ENCODE measurements at regions of chr3 and their contacts with region 1.

Region 1: DNA sequence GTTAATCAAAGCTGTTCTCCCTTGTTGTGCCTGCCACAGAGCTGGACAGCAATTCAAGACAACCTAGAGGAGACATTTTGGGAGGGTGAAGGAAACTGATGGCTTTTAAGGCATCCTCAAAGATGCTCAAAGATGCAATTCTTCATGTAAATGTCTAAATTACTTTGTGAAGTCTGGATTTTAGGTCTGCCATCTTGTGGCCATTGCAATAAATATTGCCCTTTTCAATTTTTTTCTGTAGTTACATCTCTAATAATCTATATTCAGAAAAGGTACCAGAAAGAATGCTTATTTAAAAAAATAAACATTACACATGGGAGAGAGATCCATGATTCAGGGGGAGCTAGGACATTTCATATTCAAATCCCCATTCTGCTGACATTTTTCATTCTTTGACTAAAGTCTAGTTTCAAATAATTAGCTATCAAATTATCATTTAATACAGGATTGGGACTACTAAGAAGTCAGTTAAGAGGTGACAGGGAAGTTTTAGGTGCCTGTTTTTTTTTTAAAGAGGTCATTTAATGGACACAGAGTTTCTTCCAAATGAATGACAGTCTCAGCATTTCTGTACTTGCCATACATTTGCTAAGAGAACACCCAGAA is 259.8 kb upstream of the WNT5A start:
- DNase-seq: no peak
- ATAC-seq: no peak
- H3K4me3 ChIP-seq: no peak overlapping the region
- H3K27ac ChIP-seq: no peak overlapping the region
- H3K4me1 ChIP-seq: no peaks in the 10 kb centered on the region
- H3K27me3 ChIP-seq: no peaks in the 10 kb centered on the region
- CTCF ChIP-seq: peak; percentile 32 to 47 (median 45); a peak in 4 of 6 replicates
- EP300 ChIP-seq: no peak
- POLR2A ChIP-seq: no peak
- RAD21 ChIP-seq: peak; percentile 48

Region 2: DNA sequence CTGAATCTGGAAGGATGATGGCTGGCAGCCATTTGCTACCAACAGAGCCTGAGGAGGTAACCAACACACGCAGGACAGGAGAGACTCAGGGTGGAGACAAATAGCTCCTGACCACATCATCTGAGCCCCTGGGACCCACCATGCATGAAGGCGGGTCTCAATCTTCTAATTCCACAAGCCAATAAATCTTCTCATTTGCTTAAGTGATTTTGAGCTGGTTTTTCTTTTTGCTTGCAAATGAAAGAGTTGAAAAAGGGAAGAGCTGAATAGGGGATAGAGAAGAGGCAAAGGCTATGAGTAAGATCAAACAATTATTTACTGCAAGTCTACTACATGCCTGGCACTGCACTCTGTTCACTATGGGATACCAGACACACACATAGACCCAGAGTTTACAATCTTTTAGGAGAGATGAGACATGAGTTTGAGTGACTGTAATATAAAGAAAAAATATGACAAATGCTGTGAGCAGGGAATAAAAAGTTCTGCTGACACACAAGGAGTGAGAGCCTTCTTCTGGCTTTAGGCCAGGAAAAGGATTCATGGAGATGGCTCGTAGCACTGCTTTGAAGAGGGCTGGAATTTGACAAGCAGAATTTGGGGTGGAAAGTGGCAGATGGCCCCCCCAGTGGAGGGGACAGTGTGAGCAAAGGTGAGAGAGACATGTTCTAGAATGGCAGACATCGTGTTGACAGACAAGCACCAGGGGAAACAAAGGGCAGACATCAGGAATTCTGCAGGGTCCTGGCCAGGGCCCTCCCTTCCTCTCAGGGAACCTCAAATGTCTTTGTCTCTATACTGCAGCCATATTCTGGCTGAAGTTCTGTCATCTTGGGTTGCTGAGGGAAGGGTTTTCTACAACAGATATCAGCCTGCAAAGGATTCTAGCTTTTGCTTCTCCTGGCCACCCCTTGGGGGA is 190.0 kb before region 1 on chr3:
- CTCF ChIA-PET with region 1: no interaction called
- POLR2A ChIA-PET with region 1: no interaction called
- RAD21 ChIA-PET with region 1: no interaction called
- SMC1A ChIA-PET with region 1: no interaction called
- in situ Hi-C with region 1: no loop called
- intact Hi-C with region 1: no loop called
- DNase-seq: no peak
- ATAC-seq: no peak
- H3K4me3 ChIP-seq: no peak overlapping the region
- H3K27ac ChIP-seq: no peak overlapping the region
- H3K4me1 ChIP-seq: no peaks in the 10 kb centered on the region
- H3K27me3 ChIP-seq: no peaks in the 10 kb centered on the region
- CTCF ChIP-seq: no peak
- EP300 ChIP-seq: no peak
- POLR2A ChIP-seq: no peak
- RAD21 ChIP-seq: no peak

Region 3: DNA sequence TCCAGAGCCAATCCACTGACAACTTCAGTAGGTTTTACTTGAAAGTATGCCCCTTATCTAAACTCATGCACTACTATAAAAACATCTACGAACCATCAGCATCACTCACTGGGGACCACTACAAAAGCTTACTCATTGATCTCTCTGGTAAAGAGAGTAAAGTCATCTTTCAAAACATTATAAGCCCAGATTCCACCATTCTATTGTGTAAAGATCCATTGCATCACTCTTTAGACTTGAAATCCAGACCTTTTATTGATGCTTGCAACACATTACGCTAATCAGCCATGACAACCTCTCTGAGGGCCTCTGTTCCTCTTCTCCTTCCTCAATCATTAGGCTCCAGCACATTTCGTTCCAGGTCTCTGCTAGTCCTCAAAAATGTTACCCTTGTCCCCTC is 10.9 kb before region 1 on chr3:
- CTCF ChIA-PET with region 1: interaction called, 17 read pairs
- POLR2A ChIA-PET with region 1: no interaction called
- RAD21 ChIA-PET with region 1: no interaction called
- SMC1A ChIA-PET with region 1: interaction called, 5 read pairs
- in situ Hi-C with region 1: no loop called
- intact Hi-C with region 1: no loop called
- DNase-seq: no peak
- ATAC-seq: no peak
- H3K4me3 ChIP-seq: no peak overlapping the region
- H3K27ac ChIP-seq: no peak overlapping the region
- H3K4me1 ChIP-seq: no peaks in the 10 kb centered on the region
- H3K27me3 ChIP-seq: peaks cover 1 to 3% of the 10 kb centered on the region in 2 experiments; a peak in 2 of 4 replicates
- CTCF ChIP-seq: no peak
- EP300 ChIP-seq: no peak
- POLR2A ChIP-seq: no peak
- RAD21 ChIP-seq: no peak